PC-9 (cell line): ENCODE measurements at regions of chr14 and their contacts with region 1.

Region 1: DNA sequence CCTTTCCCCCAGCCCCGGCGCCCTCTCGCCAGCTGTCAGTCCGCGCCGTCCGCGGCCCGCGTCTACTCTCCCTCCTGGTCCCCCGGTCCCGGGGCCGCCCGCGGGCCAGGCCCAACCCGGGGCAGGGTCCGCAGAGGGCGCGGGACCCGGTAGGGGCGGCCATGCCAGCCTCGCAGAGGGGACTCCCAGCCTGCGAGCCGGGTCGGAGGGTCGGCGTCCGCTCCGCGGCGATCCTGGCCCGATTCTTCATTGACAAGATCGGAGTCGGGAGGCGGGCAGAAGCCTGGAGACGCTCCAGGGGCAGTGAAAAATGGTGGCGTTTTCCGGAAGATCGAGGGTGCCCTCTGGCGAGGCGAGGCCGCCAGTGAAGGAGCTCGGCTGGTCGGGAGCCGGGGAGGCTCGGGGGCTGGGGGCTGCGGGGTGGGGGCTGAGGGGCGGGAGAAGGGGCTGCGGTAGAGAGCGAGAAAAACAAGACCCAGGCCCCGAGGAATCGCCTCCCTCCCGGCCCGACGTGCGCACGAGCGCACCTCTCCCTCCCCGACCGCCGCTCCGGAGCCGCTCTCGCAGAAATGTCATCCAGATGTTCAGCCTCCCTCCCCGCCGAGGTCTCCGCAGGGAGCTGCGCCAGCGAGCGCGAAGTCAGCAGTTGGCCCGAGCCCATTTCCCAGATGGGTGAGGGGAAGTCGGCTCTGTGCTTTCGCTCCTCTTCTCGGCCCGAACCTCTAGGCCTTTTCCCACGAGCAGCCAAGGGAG is 647 bp upstream of the TGFB3 start:
- DNase-seq: peak; percentile 71 to 96
- H3K4me3 ChIP-seq: peak overlapping the region; percentile 85
- H3K27ac ChIP-seq: no peak overlapping the region
- H3K4me1 ChIP-seq: peaks cover 37% of the 10 kb centered on the region
- H3K27me3 ChIP-seq: no peaks in the 10 kb centered on the region
- CTCF ChIP-seq: peak; percentile 79

Region 2: GRCh38 chr14:75307700-75308379 is 674.6 kb before region 1 on chr14:
- CTCF ChIA-PET with region 1: interaction called, 19 read pairs
- POLR2A ChIA-PET with region 1: interaction called, 22 read pairs
- intact Hi-C with region 1: loop called (anchors 1 kb)
- DNase-seq: peak; percentile 77 to 97
- H3K4me3 ChIP-seq: no peak overlapping the region
- H3K27ac ChIP-seq: no peak overlapping the region
- H3K4me1 ChIP-seq: peaks cover 15% of the 10 kb centered on the region
- H3K27me3 ChIP-seq: no peaks in the 10 kb centered on the region
- CTCF ChIP-seq: peak; percentile 99

Region 3: GRCh38 chr14:75560962-75561432 is 421.4 kb before region 1 on chr14:
- CTCF ChIA-PET with region 1: interaction called, 17 read pairs
- POLR2A ChIA-PET with region 1: interaction called, 5 read pairs
- intact Hi-C with region 1: no loop called
- DNase-seq: peak; percentile 90 to 98
- H3K4me3 ChIP-seq: no peak overlapping the region
- H3K27ac ChIP-seq: peak overlapping the region; percentile 89
- H3K4me1 ChIP-seq: peaks cover 57% of the 10 kb centered on the region
- H3K27me3 ChIP-seq: no peaks in the 10 kb centered on the region
- CTCF ChIP-seq: peak; percentile 99

Region 4: DNA sequence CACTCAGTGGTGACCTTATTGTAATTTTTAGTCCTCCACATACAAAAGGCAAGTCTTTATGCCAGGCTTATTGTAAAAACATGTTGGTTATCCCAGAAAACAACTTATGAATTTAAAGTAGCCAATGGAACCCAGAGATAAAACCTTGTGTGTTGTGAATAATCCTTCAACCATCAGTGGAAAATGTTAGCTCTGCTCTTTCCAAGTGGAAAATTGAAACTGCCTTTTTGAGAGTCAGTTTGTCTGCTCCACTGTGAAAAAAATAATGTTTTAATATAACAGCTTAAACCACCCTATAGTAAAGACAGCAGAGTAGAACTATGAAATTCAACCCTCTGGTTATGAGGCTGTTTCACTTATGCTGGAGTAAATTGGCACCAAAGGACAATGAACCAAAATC is 209.4 kb before region 1 on chr14:
- CTCF ChIA-PET with region 1: interaction called, 11 read pairs
- POLR2A ChIA-PET with region 1: no interaction called
- intact Hi-C with region 1: no loop called
- DNase-seq: no peak
- H3K4me3 ChIP-seq: no peak overlapping the region
- H3K27ac ChIP-seq: no peak overlapping the region
- H3K4me1 ChIP-seq: no peaks in the 10 kb centered on the region
- H3K27me3 ChIP-seq: no peaks in the 10 kb centered on the region
- CTCF ChIP-seq: no peak

Region 5: DNA sequence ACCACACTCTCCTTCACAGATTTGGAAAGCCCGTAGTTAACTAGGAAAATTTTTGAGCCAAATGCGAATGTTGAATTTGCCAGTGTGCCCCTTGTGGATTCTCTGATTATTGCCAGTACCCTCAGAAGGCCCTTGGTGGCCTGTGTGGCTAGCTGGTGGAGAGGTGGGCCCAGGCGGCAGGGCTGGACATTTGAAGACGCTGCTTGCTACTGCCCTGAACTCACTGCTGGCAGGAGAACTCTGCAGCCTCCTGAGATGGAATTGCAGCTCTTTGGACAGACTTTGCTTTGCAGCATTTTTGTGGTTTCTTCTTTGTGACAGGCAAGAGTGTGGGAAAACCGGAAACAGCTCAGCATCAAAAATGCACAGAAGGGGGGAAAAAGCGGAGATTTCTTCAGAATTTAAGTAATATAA is 98.2 kb before region 1 on chr14:
- CTCF ChIA-PET with region 1: interaction called, 15 read pairs
- POLR2A ChIA-PET with region 1: interaction called, 3 read pairs
- intact Hi-C with region 1: no loop called
- DNase-seq: peak; percentile 67 to 73
- H3K4me3 ChIP-seq: no peak overlapping the region
- H3K27ac ChIP-seq: 0 out of 2 replicates have a peak overlapping the region, but pooled peaks have one; percentile 2
- H3K4me1 ChIP-seq: peaks cover 37% of the 10 kb centered on the region
- H3K27me3 ChIP-seq: no peaks in the 10 kb centered on the region
- CTCF ChIP-seq: peak; percentile 57

Region 6: DNA sequence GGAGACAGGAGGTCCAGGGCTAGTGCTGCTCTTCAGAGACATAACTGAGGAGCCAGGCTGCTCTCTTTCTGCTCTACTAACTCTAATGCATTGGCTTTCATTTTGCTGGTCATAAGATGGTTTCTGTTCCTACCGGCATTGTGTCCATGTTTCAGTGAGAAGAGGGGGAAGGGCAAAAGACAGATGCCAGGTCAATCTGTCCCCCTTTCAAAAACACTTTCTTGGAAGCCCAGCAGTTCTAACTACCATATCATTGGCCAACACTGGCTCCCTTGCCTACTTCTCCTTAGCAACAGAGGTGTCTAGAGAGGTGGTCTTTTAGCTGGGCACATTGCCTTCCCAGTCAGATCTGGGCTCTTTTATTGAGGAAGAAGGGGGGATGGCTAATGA is 64.5 kb before region 1 on chr14:
- CTCF ChIA-PET with region 1: no interaction called
- POLR2A ChIA-PET with region 1: no interaction called
- intact Hi-C with region 1: no loop called
- DNase-seq: no peak
- H3K4me3 ChIP-seq: no peak overlapping the region
- H3K27ac ChIP-seq: no peak overlapping the region
- H3K4me1 ChIP-seq: peaks cover 8% of the 10 kb centered on the region; the same call in 1 of the 2 replicates
- H3K27me3 ChIP-seq: no peaks in the 10 kb centered on the region
- CTCF ChIP-seq: no peak

Region 7: GRCh38 chr14:76647697-76648298 is 665.4 kb after region 1 on chr14:
- CTCF ChIA-PET with region 1: interaction called, 9 read pairs
- POLR2A ChIA-PET with region 1: no interaction called
- intact Hi-C with region 1: loop called (anchors 5 kb)
- DNase-seq: peak; percentile 47 to 52
- H3K4me3 ChIP-seq: no peak overlapping the region
- H3K27ac ChIP-seq: no peak overlapping the region
- H3K4me1 ChIP-seq: no peaks in the 10 kb centered on the region
- H3K27me3 ChIP-seq: peaks cover 89% of the 10 kb centered on the region
- CTCF ChIP-seq: peak; percentile 95